Dendritic cell treated with granulocyte-macrophage colony-stimulating factor and Interleukin-4, amounts not matched to agents 40 ng/mL and 50 ng/mL, for 4 days (primary cell): ENCODE measurements at regions of chr11 and their contacts with region 1.

Region 1: GRCh38 chr11:74170694-74171629 is at the starts of genes C2CD3 and PPME1:
- H3K4me3 Mint-ChIP-seq: no peak within 1 kb of the TSS
- H3K27ac Mint-ChIP-seq: no peak within 1 kb of the TSS
- H3K4me1 Mint-ChIP-seq: peaks cover 6% of the 10 kb centered on the region
- H3K27me3 Mint-ChIP-seq: no peaks in the 10 kb centered on the region

Region 2: DNA sequence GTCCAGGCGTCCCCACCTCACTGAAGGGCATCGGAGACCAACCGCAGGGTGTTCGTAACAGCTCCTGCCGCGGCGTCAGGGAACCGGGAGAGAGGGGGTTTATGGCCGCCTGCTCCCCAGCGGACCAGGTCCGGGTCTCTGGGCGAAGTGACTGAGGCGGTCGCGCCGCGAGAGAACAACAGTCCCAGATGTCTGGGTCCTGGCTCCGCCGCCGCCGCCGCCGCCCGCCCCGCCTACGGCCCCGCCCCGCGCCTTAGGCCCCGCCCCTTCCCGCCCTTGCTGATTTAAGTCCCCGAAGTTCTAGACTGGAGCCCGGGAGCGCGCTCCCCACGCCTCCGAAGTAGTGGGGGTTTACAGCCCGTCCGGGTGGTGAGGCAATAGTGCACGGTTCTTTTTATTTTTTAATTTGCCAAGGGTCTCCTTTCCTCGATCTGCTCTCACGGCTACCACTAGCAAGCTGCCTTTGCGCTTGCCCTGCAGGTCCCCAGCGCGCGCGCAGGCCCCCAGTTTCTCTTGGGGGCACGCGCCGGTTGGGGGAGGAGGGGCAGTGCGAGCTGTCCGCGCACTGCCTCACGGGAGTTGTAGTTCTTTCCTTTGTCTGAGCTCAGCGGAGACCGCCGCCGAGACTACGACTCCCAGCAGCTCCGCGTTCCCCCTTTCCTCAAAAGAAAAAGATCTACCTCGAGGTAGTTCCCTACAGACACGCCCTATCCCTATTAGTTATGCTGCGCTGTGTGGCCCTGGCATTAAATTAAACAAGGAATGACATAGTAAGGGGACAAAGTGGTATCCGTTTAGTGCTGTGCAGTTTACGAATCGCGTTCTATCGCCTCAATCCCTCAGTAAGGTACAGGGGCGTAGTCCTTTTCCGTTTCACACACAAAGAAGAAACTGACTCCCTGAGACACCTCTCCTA is 227.5 kb after region 1 on chr11 and contains the start of gene PGM2L1:
- intact Hi-C with region 1: loop called (anchors 5 kb)
- H3K4me3 Mint-ChIP-seq: peak within 1 kb of the TSS; percentile 96
- H3K27ac Mint-ChIP-seq: peak within 1 kb of the TSS; percentile 98
- H3K4me1 Mint-ChIP-seq: peaks cover 17% of the 10 kb centered on the region
- H3K27me3 Mint-ChIP-seq: no peaks in the 10 kb centered on the region